ENCODE measurements at regions of chr19 and their contacts with region 1.

Region 1: DNA sequence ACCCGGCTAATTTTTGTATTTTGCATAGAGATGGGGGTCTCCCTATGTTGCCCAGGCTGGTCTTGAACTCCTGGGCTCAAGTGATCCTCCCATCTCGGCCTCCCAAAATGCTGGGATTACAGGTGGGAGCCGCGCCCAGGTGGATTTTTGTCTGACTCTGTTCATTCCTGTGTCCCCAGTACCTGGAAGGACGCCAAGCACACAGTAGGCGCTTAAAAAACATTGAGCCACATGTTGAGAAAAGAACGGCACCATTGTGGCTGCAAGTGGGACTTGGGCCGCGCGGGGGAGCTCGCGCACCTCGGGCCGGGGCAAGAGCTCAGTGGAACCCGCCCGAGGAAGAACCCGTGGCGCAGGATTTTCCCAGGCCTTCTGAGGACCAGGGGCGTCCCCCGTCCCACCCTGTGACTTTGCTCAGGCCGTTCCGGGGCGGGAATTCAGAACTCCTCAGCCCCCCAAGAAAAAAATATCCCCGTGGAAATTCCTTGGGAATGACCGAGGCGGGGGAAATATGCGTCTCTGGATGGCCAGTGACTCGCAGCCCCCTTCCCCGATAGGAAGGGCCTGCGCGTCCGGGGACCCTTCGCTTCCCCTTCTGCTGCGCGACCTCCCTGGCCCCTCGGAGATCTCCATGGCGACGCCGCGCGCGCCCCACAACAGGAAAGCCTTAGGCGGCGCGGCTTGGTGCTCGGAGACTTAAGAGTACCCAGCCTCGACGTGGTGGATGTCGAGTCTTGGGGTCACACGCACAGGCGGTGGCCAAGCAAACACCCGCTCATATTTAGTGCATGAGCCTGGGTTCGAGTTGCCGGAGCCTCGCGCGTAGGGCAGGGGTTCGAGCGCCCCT is 1.4 kb upstream of the ICAM1 start:
- DNase-seq: peak; percentile 96
- ATAC-seq: peak; percentile 69
- H3K4me3 Mint-ChIP-seq: peak overlapping the region; percentile 86
- H3K27ac Mint-ChIP-seq: peak overlapping the region; percentile 92
- H3K4me1 Mint-ChIP-seq: peaks cover 23% of the 10 kb centered on the region
- H3K27me3 Mint-ChIP-seq: no peaks in the 10 kb centered on the region

Region 2: GRCh38 chr19:10286803-10287737 is 17.5 kb after region 1 on chr19 and contains the start of gene ICAM4:
- POLR2A ChIA-PET with region 1: interaction called, 60 read pairs
- DNase-seq: peak; percentile 72
- ATAC-seq: peak; percentile 65
- H3K4me3 Mint-ChIP-seq: peak within 1 kb of the TSS; percentile 75
- H3K27ac Mint-ChIP-seq: peak within 1 kb of the TSS; percentile 42
- H3K4me1 Mint-ChIP-seq: peaks cover 47% of the 10 kb centered on the region
- H3K27me3 Mint-ChIP-seq: peaks cover 41% of the 10 kb centered on the region
- total RNA-seq, gene ICAM4: 1.2 to 1.7 TPM

Region 3: DNA sequence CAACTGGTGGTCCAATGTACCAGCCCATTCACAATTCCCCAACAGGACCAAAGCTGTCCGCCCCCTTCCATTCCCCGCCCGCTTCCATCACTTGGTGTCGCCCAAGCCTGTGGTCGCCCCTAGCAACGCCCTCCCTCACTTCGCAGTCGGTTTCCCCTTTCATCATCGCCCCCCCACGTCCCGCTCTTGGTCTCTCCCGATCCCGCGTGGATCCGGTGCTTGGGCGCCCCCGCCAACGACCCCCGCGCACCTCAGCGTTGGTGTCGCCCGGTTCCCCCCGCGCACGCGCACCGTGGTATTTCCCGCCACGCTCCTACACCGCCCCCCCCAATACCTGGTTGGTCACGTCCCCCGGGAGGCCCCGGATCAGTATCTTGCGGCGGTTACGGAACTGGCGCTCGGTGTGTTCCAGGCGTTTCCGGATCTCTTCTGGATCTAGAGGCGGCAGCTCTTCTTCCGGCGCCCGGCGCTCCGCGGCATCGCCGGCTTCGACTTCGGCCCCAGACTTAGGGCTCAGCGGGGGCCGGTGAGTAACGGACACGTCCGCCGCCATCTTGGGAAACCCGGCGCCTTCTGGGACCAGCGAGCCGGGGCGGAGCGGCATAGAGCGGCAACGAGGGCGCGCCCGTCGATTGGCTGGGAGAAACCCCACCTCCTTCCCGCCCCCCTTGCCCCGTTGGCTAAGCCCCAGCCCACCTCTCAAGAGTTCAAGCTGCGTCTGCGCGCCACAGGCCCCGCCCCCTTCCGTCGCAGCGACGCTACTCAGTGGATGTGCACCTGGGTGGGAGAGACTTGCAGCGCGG is 63.6 kb after region 1 on chr19 and contains the start of gene RAVER1:
- POLR2A ChIA-PET with region 1: interaction called, 27 read pairs
- DNase-seq: peak; percentile 96
- ATAC-seq: peak; percentile 96
- H3K4me3 Mint-ChIP-seq: peak within 1 kb of the TSS; percentile 96
- H3K27ac Mint-ChIP-seq: peak within 1 kb of the TSS; percentile 94
- H3K4me1 Mint-ChIP-seq: peaks cover 23% of the 10 kb centered on the region
- H3K27me3 Mint-ChIP-seq: no peaks in the 10 kb centered on the region
- total RNA-seq, gene RAVER1: 77.9 to 78.5 TPM

Region 4: GRCh38 chr19:10388957-10389356 is 119.4 kb after region 1 on chr19:
- POLR2A ChIA-PET with region 1: interaction called, 25 read pairs
- DNase-seq: peak; percentile 78
- ATAC-seq: peak; percentile 38
- H3K4me3 Mint-ChIP-seq: no peak overlapping the region
- H3K27ac Mint-ChIP-seq: no peak overlapping the region
- H3K4me1 Mint-ChIP-seq: peaks cover 9% of the 10 kb centered on the region
- H3K27me3 Mint-ChIP-seq: no peaks in the 10 kb centered on the region